PC-9 (cell line): ENCODE measurements at regions of chr6 and their contacts with region 1.

Region 1: GRCh38 chr6:30914076-30914853 is at the start of gene VARS2:
- DNase-seq: peak; percentile 78 to 99
- H3K4me3 ChIP-seq: peak within 1 kb of the TSS; percentile 84
- H3K27ac ChIP-seq: peak within 1 kb of the TSS; percentile 46
- H3K4me1 ChIP-seq: peaks cover 17% of the 10 kb centered on the region
- H3K27me3 ChIP-seq: no peaks in the 10 kb centered on the region
- CTCF ChIP-seq: peak; percentile 46
- total RNA-seq, gene VARS2: 59.4 and 60.3 TPM in 2 replicates

Region 2: GRCh38 chr6:30463651-30464618 is 450.3 kb before region 1 on chr6:
- CTCF ChIA-PET with region 1: no interaction called
- POLR2A ChIA-PET with region 1: no interaction called
- intact Hi-C with region 1: no loop called
- DNase-seq: peak in 1 of 2 experiments; percentile 25
- H3K4me3 ChIP-seq: no peak overlapping the region
- H3K27ac ChIP-seq: no peak overlapping the region
- H3K4me1 ChIP-seq: no peaks in the 10 kb centered on the region; the same call in 1 of the 2 replicates
- H3K27me3 ChIP-seq: peaks cover 94% of the 10 kb centered on the region
- CTCF ChIP-seq: no peak

Region 3: GRCh38 chr6:30483677-30484279 is 430.5 kb before region 1 on chr6:
- CTCF ChIA-PET with region 1: no interaction called
- POLR2A ChIA-PET with region 1: no interaction called
- intact Hi-C with region 1: loop called (anchors 2 kb)
- DNase-seq: peak; percentile 45 to 56
- H3K4me3 ChIP-seq: no peak overlapping the region
- H3K27ac ChIP-seq: no peak overlapping the region
- H3K4me1 ChIP-seq: no peaks in the 10 kb centered on the region; the same call in 1 of the 2 replicates
- H3K27me3 ChIP-seq: peaks cover 30% of the 10 kb centered on the region
- CTCF ChIP-seq: peak; percentile 74

Region 4: GRCh38 chr6:30757261-30757935 is 156.9 kb before region 1 on chr6:
- CTCF ChIA-PET with region 1: no interaction called
- POLR2A ChIA-PET with region 1: no interaction called
- intact Hi-C with region 1: no loop called
- DNase-seq: peak in 1 of 2 experiments; percentile 54
- H3K4me3 ChIP-seq: no peak overlapping the region
- H3K27ac ChIP-seq: peak overlapping the region; percentile 4; the same call in 1 of the 2 replicates
- H3K4me1 ChIP-seq: peaks cover 39% of the 10 kb centered on the region
- H3K27me3 ChIP-seq: no peaks in the 10 kb centered on the region
- CTCF ChIP-seq: no peak

Region 5: GRCh38 chr6:30844091-30844535 is 70.2 kb before region 1 on chr6:
- CTCF ChIA-PET with region 1: interaction called, 10 read pairs
- POLR2A ChIA-PET with region 1: no interaction called
- intact Hi-C with region 1: no loop called
- DNase-seq: peak; percentile 53 to 64
- H3K4me3 ChIP-seq: no peak overlapping the region
- H3K27ac ChIP-seq: no peak overlapping the region
- H3K4me1 ChIP-seq: peaks cover 34% of the 10 kb centered on the region
- H3K27me3 ChIP-seq: no peaks in the 10 kb centered on the region
- CTCF ChIP-seq: no peak

Region 6: GRCh38 chr6:31068669-31069340 is 154.5 kb after region 1 on chr6:
- CTCF ChIA-PET with region 1: interaction called, 69 read pairs
- POLR2A ChIA-PET with region 1: no interaction called
- intact Hi-C with region 1: loop called (anchors 1 kb)
- DNase-seq: peak; percentile 61 to 80
- H3K4me3 ChIP-seq: no peak overlapping the region
- H3K27ac ChIP-seq: no peak overlapping the region
- H3K4me1 ChIP-seq: peaks cover 3% of the 10 kb centered on the region; the same call in 1 of the 2 replicates
- H3K27me3 ChIP-seq: no peaks in the 10 kb centered on the region
- CTCF ChIP-seq: peak; percentile 94

Region 7: GRCh38 chr6:31114970-31115849 is 200.9 kb after region 1 on chr6:
- CTCF ChIA-PET with region 1: interaction called, 11 read pairs
- POLR2A ChIA-PET with region 1: no interaction called
- intact Hi-C with region 1: no loop called
- DNase-seq: peak; percentile 56 to 76
- H3K4me3 ChIP-seq: peak overlapping the region; percentile 58
- H3K27ac ChIP-seq: peak overlapping the region; percentile 95
- H3K4me1 ChIP-seq: peaks cover 43% of the 10 kb centered on the region
- H3K27me3 ChIP-seq: no peaks in the 10 kb centered on the region
- CTCF ChIP-seq: peak; percentile 55; the same call in 1 of the 2 replicates

Region 8: DNA sequence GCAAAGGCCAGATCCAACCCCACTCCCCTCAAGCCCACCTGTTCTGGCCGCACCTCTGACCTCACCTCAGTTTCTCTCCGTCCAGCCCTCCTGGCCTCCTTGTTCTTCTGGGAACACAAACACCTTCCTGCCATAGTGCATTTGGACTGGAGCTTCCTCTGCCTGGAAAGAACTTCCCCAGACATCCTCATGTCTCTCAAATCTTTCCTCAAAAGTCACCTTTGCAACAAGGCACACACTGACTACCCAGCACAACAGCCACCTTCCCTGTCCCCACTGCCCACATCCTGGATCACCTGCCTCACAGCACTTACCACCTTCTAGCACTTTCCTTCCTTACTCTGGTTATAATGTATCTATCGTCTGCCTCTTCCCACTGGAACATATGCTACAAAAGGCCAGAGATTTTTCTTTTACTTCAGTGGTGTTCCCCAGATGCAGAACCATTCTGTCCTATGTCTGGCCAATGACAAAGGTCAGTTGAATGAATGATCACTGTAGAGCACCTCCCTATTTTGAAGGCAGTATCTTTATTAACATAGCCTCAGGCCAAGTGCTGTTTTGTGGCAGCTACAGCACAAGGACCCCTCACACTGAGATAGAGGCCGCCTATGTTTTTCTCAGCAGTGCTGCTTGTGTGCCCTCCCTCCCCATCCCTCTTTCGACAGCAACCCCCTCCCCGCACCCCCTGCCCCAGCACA is 438.6 kb after region 1 on chr6:
- CTCF ChIA-PET with region 1: no interaction called
- POLR2A ChIA-PET with region 1: no interaction called
- intact Hi-C with region 1: no loop called
- DNase-seq: no peak
- H3K4me3 ChIP-seq: no peak overlapping the region
- H3K27ac ChIP-seq: no peak overlapping the region
- H3K4me1 ChIP-seq: no peaks in the 10 kb centered on the region
- H3K27me3 ChIP-seq: peaks cover 15% of the 10 kb centered on the region
- CTCF ChIP-seq: no peak

Region 9: GRCh38 chr6:31366693-31367470 is 452.6 kb after region 1 on chr6:
- CTCF ChIA-PET with region 1: no interaction called
- POLR2A ChIA-PET with region 1: no interaction called
- intact Hi-C with region 1: loop called (anchors 10 kb)
- DNase-seq: peak; percentile 64 to 65
- H3K4me3 ChIP-seq: peak overlapping the region; percentile 31; the same call in 1 of the 2 replicates
- H3K27ac ChIP-seq: no peak overlapping the region
- H3K4me1 ChIP-seq: no peaks in the 10 kb centered on the region
- H3K27me3 ChIP-seq: peaks cover 38% of the 10 kb centered on the region
- CTCF ChIP-seq: peak; percentile 88